ENCODE measurements at regions of chr17 and their contacts with region 1.

Region 1: DNA sequence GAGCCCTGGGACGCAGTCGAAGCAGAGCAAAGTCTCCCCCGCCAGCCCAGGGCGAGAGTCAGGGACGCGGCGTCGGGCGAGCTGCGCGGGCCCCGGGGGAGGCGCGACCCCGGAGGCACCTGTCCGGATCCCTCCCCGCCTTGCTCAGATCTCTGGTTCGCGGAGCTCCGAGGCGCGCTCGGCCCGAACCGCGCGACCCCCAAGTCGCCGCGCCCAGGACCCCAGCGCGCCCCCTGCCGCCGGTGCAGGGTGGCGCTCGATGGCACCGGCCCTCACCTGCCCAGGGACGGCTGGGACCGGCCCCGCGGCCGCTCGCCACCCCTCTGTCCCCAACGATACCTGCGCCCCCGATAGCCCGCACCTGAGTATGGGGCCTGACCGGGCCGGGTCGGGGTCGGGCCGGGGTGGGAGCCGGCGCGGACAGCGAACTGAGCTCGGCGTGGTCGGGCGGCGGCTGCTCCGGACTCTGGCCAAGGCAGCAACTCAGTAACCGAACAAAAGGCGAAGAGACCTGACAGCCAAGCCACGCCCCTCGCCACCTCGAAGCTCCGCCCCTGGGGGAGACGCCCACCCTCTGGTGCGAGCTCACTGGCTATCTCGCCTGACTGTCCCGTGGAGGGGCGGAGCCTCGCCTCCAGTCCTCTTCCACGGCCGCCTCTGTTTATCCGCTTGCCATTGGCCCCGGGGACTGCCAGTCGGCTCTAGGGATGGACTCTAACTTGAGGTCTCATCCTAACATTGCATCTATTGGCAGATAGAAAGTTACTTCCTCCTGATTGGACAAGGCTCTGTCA is at the start of gene JUP:
- DNase-seq: peak; percentile 99
- ATAC-seq: peak; percentile 97
- H3K4me3 ChIP-seq: peak within 1 kb of the TSS; percentile 60 to 90 (median 71)
- H3K27ac ChIP-seq: peak within 1 kb of the TSS; percentile 62
- H3K4me1 ChIP-seq: peaks cover 34% of the 10 kb centered on the region
- H3K27me3 ChIP-seq: no peaks in the 10 kb centered on the region; a peak in 1 of 5 replicates
- CTCF ChIP-seq: peak; percentile 83
- EP300 ChIP-seq: no peak
- POLR2A ChIP-seq: peak; percentile 89 to 97
- RAD21 ChIP-seq: peak; percentile 93
- total RNA-seq, gene JUP: 20.6 and 20.9 TPM in 2 replicates

Region 2: GRCh38 chr17:41500131-41500911 is 286.1 kb before region 1 on chr17:
- CTCF ChIA-PET with region 1: no interaction called
- POLR2A ChIA-PET with region 1: no interaction called
- in situ Hi-C with region 1: no loop called
- intact Hi-C with region 1: no loop called
- DNase-seq: no peak
- ATAC-seq: no peak
- H3K4me3 ChIP-seq: no peak overlapping the region
- H3K27ac ChIP-seq: no peak overlapping the region
- H3K4me1 ChIP-seq: peaks cover 6% of the 10 kb centered on the region; the same call in 1 of the 2 replicates
- H3K27me3 ChIP-seq: peaks cover 9 to 44% of the 10 kb centered on the region in 2 experiments
- CTCF ChIP-seq: no peak
- EP300 ChIP-seq: no peak
- POLR2A ChIP-seq: no peak
- RAD21 ChIP-seq: no peak

Region 3: GRCh38 chr17:41750862-41751261 is 35.6 kb before region 1 on chr17:
- CTCF ChIA-PET with region 1: no interaction called
- POLR2A ChIA-PET with region 1: interaction called, 25 read pairs
- in situ Hi-C with region 1: no loop called
- intact Hi-C with region 1: no loop called
- DNase-seq: no peak
- ATAC-seq: no peak
- H3K4me3 ChIP-seq: no peak overlapping the region
- H3K27ac ChIP-seq: no peak overlapping the region
- H3K4me1 ChIP-seq: peaks cover 40% of the 10 kb centered on the region
- H3K27me3 ChIP-seq: no peaks in the 10 kb centered on the region; a peak in 1 of 5 replicates
- CTCF ChIP-seq: no peak
- EP300 ChIP-seq: no peak
- POLR2A ChIP-seq: no peak
- RAD21 ChIP-seq: no peak